ENCODE measurements at regions of chr17 and their contacts with region 1.

Region 1: GRCh38 chr17:81683584-81684237 is at the starts of genes ARL16 and HGS:
- DNase-seq: peak; percentile 95
- ATAC-seq: peak; percentile 99
- H3K4me3 ChIP-seq: peak within 1 kb of the TSS; percentile 95
- H3K27ac ChIP-seq: peak within 1 kb of the TSS; percentile 78
- H3K4me1 ChIP-seq: peaks cover 11% of the 10 kb centered on the region
- H3K27me3 ChIP-seq: no peaks in the 10 kb centered on the region
- CTCF ChIP-seq: no peak
- EP300 ChIP-seq: no peak
- POLR2A ChIP-seq: peak; percentile 88
- RAD21 ChIP-seq: no peak
- polyA plus RNA-seq, gene ARL16: 4.7 to 20.8 TPM
- polyA plus RNA-seq, gene HGS: 2.2 to 3.7 TPM

Region 2: GRCh38 chr17:81702971-81703746 is 19.4 kb after region 1 on chr17 and contains the start of gene MRPL12:
- CTCF ChIA-PET with region 1: no interaction called
- POLR2A ChIA-PET with region 1: interaction called, 32 read pairs
- RAD21 ChIA-PET with region 1: interaction called, 5 read pairs
- SMC1A ChIA-PET with region 1: interaction called, 3 read pairs
- in situ Hi-C with region 1: no loop called
- intact Hi-C with region 1: loop called (anchors 2 kb)
- DNase-seq: peak; percentile 69
- ATAC-seq: peak; percentile 95
- H3K4me3 ChIP-seq: peak within 1 kb of the TSS; percentile 85
- H3K27ac ChIP-seq: peak within 1 kb of the TSS; percentile 94
- H3K4me1 ChIP-seq: peaks cover 8% of the 10 kb centered on the region
- H3K27me3 ChIP-seq: no peaks in the 10 kb centered on the region
- CTCF ChIP-seq: no peak
- EP300 ChIP-seq: no peak
- POLR2A ChIP-seq: peak; percentile 94
- RAD21 ChIP-seq: no peak
- polyA plus RNA-seq, gene MRPL12: 1.3 to 4.5 TPM